ENCODE measurements at regions of chr7 and their contacts with region 1.

Region 1: GRCh38 chr7:139691253-139691781 is 86.5 kb downstream of the HIPK2 start:
- DNase-seq: peak; percentile 69 to 91
- ATAC-seq: peak; percentile 87 to 89 (median 88)
- H3K4me3 ChIP-seq: no peak overlapping the region
- H3K27ac ChIP-seq: peak overlapping the region; percentile 74
- H3K4me1 ChIP-seq: peaks cover 58% of the 10 kb centered on the region
- H3K27me3 ChIP-seq: no peaks in the 10 kb centered on the region
- CTCF ChIP-seq: no peak

Region 2: DNA sequence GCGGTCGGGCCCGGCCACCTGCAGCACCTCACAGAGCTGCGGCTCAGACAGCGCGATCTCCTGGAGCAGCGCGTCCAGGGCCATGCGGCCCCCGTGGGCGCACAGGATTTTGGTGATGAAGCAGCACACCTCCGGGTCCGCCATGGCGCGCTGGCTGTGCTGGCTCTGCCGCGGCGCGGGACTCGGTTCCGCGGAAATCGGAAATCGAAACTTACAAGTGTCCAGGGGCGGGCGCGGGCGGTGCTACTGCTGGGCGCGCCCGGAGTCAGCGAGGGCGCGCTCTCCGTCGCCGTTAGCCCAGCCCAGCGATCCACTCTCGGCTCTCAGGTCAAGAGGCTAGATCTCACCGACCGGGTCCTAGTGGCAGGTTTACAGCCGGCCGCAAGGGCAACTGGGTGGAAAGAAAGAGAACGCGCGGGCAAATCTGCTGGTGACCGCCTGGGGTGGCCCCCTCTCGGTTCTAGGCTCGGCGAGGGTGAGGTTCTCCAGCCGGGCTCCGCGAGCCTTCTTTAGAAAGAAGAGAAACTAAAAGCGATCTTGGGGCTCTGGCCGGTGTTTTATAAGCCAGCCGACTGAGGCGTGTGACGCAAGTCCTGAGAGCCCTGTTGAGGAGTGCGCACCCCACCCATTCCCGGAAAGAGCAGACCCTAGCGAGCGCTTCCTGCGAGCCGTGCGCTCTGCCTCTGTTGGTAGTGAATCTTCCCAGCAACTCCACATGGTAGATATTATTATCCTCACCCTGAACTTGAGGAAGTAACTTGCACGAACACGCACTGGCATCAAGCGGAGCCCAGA is 581.9 kb before region 1 on chr7 and contains the start of gene ZC3HAV1:
- intact Hi-C with region 1: no loop called
- DNase-seq: peak; percentile 85 to 89
- ATAC-seq: peak; percentile 84 to 92 (median 87)
- H3K4me3 ChIP-seq: peak within 1 kb of the TSS; percentile 88
- H3K27ac ChIP-seq: peak within 1 kb of the TSS; percentile 88
- H3K4me1 ChIP-seq: peaks cover 2% of the 10 kb centered on the region
- H3K27me3 ChIP-seq: no peaks in the 10 kb centered on the region
- CTCF ChIP-seq: no peak
- total RNA-seq, gene ZC3HAV1: 3.0 to 5.3 (median 4.4) TPM

Region 3: DNA sequence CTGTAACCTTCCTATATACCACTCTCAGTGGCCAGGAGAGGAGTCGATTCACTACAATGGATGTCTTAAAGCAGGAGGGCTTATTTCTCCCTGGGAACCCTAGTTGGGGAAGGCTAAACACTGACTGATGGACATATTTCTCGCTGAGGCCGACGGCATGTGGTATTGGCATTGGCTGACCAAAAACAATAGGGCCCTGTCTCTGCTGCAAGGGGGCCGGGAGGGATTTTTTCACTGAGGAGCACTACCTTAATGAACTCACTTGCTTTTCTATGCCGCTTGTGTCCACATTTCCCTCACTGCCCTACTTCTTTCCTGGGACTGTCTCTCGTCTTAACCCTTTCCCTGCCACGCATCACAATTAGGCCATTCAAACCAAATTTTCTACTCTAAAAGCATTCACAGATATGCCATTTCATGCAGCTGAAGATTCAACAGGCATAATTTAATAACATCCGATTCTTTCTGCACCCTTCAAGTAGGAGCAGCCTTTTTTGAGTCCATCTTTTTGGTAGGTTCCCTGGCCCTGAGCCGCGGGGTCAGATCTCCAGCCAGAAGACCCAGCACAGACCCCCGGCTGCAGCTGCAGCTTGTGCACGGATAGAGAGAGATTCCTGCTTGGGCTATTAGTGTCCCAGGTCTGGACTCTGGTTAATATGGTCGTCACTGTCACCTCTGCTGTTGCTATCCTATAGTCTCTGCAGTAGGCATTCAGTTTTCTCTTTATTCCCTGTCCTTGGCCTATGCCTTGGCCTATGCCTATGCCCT is 32.2 kb before region 1 on chr7:
- intact Hi-C with region 1: loop called in 1 of 2 experiments (anchors 5 kb)
- DNase-seq: no peak
- ATAC-seq: no peak
- H3K4me3 ChIP-seq: no peak overlapping the region
- H3K27ac ChIP-seq: no peak overlapping the region
- H3K4me1 ChIP-seq: peaks cover 44% of the 10 kb centered on the region
- H3K27me3 ChIP-seq: no peaks in the 10 kb centered on the region
- CTCF ChIP-seq: no peak

Region 4: GRCh38 chr7:139731802-139732470 is 40.6 kb after region 1 on chr7:
- intact Hi-C with region 1: loop called (anchors 5 kb)
- DNase-seq: peak; percentile 88 to 94
- ATAC-seq: peak; percentile 79 to 86 (median 82)
- H3K4me3 ChIP-seq: peak overlapping the region; percentile 32
- H3K27ac ChIP-seq: peak overlapping the region; percentile 89
- H3K4me1 ChIP-seq: peaks cover 79% of the 10 kb centered on the region
- H3K27me3 ChIP-seq: no peaks in the 10 kb centered on the region
- CTCF ChIP-seq: no peak

Region 5: GRCh38 chr7:139855498-139856270 is 164.4 kb after region 1 on chr7:
- intact Hi-C with region 1: no loop called
- DNase-seq: no peak
- ATAC-seq: no peak
- H3K4me3 ChIP-seq: no peak overlapping the region
- H3K27ac ChIP-seq: no peak overlapping the region
- H3K4me1 ChIP-seq: peaks cover 6% of the 10 kb centered on the region
- H3K27me3 ChIP-seq: no peaks in the 10 kb centered on the region
- CTCF ChIP-seq: no peak

Measured in psoas muscle (tissue), 8 donors.